ENCODE measurements at regions of chr12 and their contacts with region 1.

Region 1: GRCh38 chr12:57904848-57905811 is 36.2 kb upstream of the ATP23 start:
- DNase-seq: peak; percentile 78 to 86 (median 82)
- ATAC-seq: peak; percentile 72 to 94 (median 93)
- H3K4me3 ChIP-seq: peak overlapping the region in 8 of 12 donors; percentile 14 to 45 (median 30)
- H3K27ac ChIP-seq: peak overlapping the region in 2 of 12 donors; percentile 6 to 42
- H3K4me1 ChIP-seq: peaks cover 0 to 10% (median 5%) of the 10 kb centered on the region in 12 donors
- H3K27me3 ChIP-seq: peaks cover 0 to 6% (median 0%) of the 10 kb centered on the region in 9 donors
- CTCF ChIP-seq: peak; percentile 100
- POLR2A ChIP-seq: no peak

Region 2: GRCh38 chr12:57782608-57783465 is 122.3 kb before region 1 on chr12 and contains the start of gene TSFM:
- intact Hi-C with region 1: loop called in 6 of 10 experiments (anchors 1 to 5 kb)
- DNase-seq: peak; percentile 97 to 98 (median 98)
- ATAC-seq: peak; percentile 84 to 94 (median 92)
- H3K4me3 ChIP-seq: peak within 1 kb of the TSS; percentile 64 to 98 (median 92)
- H3K27ac ChIP-seq: peak within 1 kb of the TSS in 11 of 12 donors; percentile 24 to 82 (median 65)
- H3K4me1 ChIP-seq: peaks cover 0 to 41% (median 13%) of the 10 kb centered on the region in 12 donors
- H3K27me3 ChIP-seq: no peaks in the 10 kb centered on the region
- CTCF ChIP-seq: peak; percentile 86 to 98 (median 92)
- POLR2A ChIP-seq: peak in 1 of 2 donors; percentile 60
- total RNA-seq, gene TSFM: 38.8 to 62.5 (median 45.4) TPM

Region 3: GRCh38 chr12:57803319-57803893 is 101.7 kb before region 1 on chr12:
- intact Hi-C with region 1: loop called in 9 of 10 experiments (anchors 1 to 10 kb)
- DNase-seq: peak in 4 of 5 donors; percentile 43 to 62 (median 50)
- ATAC-seq: peak; percentile 68 to 87 (median 82)
- H3K4me3 ChIP-seq: no peak overlapping the region
- H3K27ac ChIP-seq: peak overlapping the region in 3 of 12 donors; percentile 15 to 20 (median 15)
- H3K4me1 ChIP-seq: peaks cover 0 to 10% (median 2%) of the 10 kb centered on the region in 12 donors
- H3K27me3 ChIP-seq: no peaks in the 10 kb centered on the region
- CTCF ChIP-seq: peak; percentile 63 to 89 (median 82)
- POLR2A ChIP-seq: no peak

Region 4: DNA sequence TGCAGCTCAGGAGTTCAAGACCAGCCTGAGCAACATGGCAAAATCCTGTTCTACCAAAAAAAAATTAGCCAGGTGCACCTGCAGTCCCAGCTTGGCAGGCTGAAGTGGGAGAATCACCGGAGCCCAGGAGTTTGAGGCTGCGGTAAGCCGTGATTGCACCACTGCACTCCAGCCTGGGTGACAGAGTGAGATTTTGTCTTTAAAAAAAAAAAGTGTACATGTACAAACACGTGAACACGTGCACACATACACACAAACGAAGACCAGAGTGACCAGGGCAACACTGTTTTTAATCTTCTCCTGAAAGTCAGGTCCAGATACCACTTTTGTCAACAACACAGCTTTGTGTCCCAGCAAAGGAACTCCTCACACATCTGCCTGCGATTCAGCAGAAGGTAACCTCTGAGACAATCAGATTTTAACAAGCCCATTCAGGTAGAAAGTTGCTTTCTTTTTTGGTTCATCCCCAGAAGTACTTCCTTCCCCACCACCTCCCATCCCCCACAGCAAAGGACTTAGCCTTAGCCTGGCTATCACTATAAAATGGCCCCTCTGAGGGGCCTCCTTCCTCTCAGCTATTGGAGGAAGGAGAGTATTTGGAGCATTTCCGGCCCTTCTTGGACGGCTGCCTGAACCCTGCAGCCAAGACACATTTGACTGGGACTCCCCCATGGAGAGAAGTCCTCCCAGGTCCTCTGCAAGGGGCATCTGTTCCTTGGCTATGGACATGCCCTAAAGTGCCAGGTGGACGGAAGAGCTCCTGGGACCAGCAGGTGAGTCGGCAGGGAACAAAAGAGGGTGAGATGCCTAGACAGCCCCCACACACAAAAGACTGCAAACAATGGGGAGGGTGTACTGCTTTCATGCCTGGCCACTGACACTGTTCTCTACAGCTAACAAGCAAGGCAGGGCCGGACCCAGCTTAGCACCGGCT is 68.4 kb before region 1 on chr12:
- intact Hi-C with region 1: loop called in 4 of 10 experiments (anchors 1 kb)
- DNase-seq: peak; percentile 87 to 91 (median 90)
- ATAC-seq: peak; percentile 37 to 76 (median 52)
- H3K4me3 ChIP-seq: peak overlapping the region in 10 of 12 donors; percentile 6 to 49 (median 26)
- H3K27ac ChIP-seq: peak overlapping the region in 11 of 12 donors; percentile 51 to 100 (median 70)
- H3K4me1 ChIP-seq: peaks cover 65 to 100% (median 100%) of the 10 kb centered on the region in 12 donors
- H3K27me3 ChIP-seq: no peaks in the 10 kb centered on the region
- CTCF ChIP-seq: no peak
- POLR2A ChIP-seq: no peak